ENCODE measurements at regions of chr12 and their contacts with region 1.

Region 1: GRCh38 chr12:56117778-56118687 is at the start of gene ZC3H10:
- DNase-seq: peak; percentile 99
- ATAC-seq: peak; percentile 77
- H3K4me3 Mint-ChIP-seq: peak within 1 kb of the TSS; percentile 97
- H3K27ac Mint-ChIP-seq: peak within 1 kb of the TSS; percentile 100
- H3K4me1 Mint-ChIP-seq: peaks cover 24% of the 10 kb centered on the region
- H3K27me3 Mint-ChIP-seq: no peaks in the 10 kb centered on the region
- total RNA-seq, gene ZC3H10: 6.4 to 6.5 TPM

Region 2: DNA sequence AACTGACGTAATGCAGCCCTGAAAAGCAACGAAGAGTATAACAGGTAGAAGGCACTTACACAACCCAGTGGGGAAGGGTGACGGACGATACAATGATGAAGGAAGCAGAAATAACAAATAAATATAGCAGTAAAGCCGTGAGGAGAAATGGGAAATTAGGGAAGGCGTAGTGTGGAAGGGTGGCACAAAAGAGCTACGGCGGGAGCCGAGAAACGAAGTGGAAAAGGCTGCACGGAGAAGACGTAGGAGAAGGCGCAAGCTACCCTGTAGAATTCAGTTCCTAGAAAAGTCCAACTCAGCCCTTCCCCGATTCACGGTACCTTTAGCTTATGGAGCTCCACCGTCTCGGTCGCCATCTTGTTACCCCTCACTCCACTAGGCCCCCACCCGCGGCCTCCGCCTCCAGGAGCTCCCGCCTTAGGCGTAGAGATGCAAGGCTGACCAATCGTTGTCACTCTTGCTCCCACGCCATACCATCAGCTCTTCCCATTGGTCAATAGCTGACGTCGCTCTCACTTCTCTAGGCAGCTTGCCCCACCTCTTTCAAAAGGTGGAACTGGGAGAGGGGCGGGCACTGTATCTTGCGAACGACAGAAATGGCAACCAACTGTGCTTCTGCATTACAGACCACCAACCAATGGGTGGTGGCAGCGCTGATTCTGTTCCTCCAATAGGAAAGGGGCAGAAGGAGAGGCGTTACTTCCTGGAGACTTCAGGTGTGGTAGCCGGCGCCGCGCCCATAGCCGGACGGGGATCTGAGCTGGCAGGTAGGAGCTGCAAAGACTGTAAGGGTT is 300.5 kb before region 1 on chr12 and contains the starts of genes ORMDL2 and SARNP:
- CTCF ChIA-PET with region 1: no interaction called
- POLR2A ChIA-PET with region 1: interaction called, 3 read pairs
- intact Hi-C with region 1: loop called (anchors 1 to 5 kb)
- DNase-seq: peak; percentile 97
- ATAC-seq: peak; percentile 98
- H3K4me3 Mint-ChIP-seq: no peak within 1 kb of the TSS
- H3K27ac Mint-ChIP-seq: no peak within 1 kb of the TSS
- H3K4me1 Mint-ChIP-seq: peaks cover 49% of the 10 kb centered on the region
- H3K27me3 Mint-ChIP-seq: no peaks in the 10 kb centered on the region
- total RNA-seq, gene ORMDL2: 29.4 to 35.6 TPM
- total RNA-seq, gene SARNP: 111 to 114 TPM

Region 3: DNA sequence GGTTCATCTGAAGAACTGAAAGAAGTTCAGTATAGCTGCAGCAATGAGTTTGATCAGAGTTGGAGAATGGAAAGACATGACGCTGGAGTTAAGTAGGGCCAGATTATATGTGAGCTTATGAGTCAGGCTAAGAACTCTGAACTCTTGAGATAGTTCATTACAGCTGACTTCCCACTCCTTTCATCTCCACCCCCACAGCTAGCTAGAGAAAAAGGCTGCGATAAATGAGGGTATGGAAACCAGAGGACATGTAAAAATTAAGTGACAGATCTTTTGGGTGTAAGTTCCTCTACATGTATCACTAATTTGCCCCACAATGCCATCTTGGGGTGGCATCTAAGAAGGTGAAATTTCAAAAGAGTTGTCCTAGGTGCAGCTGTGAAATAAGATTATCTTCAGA is 219.0 kb before region 1 on chr12:
- CTCF ChIA-PET with region 1: no interaction called
- POLR2A ChIA-PET with region 1: no interaction called
- intact Hi-C with region 1: no loop called
- DNase-seq: peak; percentile 67
- ATAC-seq: peak; percentile 97
- H3K4me3 Mint-ChIP-seq: no peak overlapping the region
- H3K27ac Mint-ChIP-seq: peak overlapping the region; percentile 79
- H3K4me1 Mint-ChIP-seq: peaks cover 9% of the 10 kb centered on the region
- H3K27me3 Mint-ChIP-seq: no peaks in the 10 kb centered on the region

Region 4: GRCh38 chr12:56078990-56079664 is 38.9 kb before region 1 on chr12:
- CTCF ChIA-PET with region 1: no interaction called
- POLR2A ChIA-PET with region 1: no interaction called
- intact Hi-C with region 1: loop called in 1 of 2 experiments (anchors 1 kb)
- DNase-seq: peak; percentile 76
- ATAC-seq: peak; percentile 42
- H3K4me3 Mint-ChIP-seq: peak overlapping the region; percentile 74
- H3K27ac Mint-ChIP-seq: no peak overlapping the region
- H3K4me1 Mint-ChIP-seq: peaks cover 8% of the 10 kb centered on the region
- H3K27me3 Mint-ChIP-seq: peaks cover 6% of the 10 kb centered on the region

Region 5: DNA sequence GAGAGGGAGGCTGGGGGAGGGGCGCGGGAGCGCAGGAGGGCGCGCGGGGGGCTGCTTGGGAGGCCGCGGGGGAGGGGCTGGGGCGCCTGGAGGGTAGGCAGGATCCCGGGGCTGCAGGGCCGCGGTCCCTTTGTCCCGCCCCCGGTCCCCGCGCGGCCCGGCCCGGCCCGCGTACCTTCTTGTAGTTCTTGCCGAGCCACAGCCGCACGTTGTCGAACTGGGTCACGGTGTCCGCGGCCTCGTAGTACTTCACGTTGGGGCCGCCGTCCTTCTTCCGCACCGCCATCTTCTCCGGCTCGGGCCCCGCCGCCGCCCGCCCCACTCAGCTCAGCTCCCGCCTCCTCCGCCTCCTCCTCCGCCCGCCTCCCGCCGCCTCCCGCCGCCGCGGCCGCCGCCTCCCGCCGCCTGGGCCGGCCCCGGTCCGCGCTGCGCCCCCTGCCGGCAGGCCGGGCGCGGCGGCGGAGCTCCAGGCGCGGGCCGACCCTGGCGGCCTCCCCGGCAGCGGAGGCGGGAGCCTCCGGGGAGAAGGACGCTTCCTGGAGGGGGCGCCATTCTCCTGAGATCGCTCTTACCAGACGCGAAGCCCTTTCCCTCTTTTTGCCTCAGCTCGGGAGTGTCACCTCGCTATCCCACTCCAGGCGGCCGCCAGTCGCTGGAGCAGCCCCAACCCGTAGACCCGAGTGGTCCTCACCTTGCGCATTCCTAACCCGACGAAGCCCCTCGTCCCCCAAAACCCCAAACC is 71.3 kb after region 1 on chr12 and contains the start of gene SMARCC2:
- CTCF ChIA-PET with region 1: interaction called, 112 read pairs
- POLR2A ChIA-PET with region 1: interaction called, 27 read pairs
- intact Hi-C with region 1: loop called (anchors 1 kb)
- DNase-seq: peak; percentile 94
- ATAC-seq: peak; percentile 82
- H3K4me3 Mint-ChIP-seq: peak within 1 kb of the TSS; percentile 82
- H3K27ac Mint-ChIP-seq: peak within 1 kb of the TSS; percentile 96
- H3K4me1 Mint-ChIP-seq: peaks cover 38% of the 10 kb centered on the region
- H3K27me3 Mint-ChIP-seq: no peaks in the 10 kb centered on the region
- total RNA-seq, gene SMARCC2: 96.9 to 123 TPM

Region 6: DNA sequence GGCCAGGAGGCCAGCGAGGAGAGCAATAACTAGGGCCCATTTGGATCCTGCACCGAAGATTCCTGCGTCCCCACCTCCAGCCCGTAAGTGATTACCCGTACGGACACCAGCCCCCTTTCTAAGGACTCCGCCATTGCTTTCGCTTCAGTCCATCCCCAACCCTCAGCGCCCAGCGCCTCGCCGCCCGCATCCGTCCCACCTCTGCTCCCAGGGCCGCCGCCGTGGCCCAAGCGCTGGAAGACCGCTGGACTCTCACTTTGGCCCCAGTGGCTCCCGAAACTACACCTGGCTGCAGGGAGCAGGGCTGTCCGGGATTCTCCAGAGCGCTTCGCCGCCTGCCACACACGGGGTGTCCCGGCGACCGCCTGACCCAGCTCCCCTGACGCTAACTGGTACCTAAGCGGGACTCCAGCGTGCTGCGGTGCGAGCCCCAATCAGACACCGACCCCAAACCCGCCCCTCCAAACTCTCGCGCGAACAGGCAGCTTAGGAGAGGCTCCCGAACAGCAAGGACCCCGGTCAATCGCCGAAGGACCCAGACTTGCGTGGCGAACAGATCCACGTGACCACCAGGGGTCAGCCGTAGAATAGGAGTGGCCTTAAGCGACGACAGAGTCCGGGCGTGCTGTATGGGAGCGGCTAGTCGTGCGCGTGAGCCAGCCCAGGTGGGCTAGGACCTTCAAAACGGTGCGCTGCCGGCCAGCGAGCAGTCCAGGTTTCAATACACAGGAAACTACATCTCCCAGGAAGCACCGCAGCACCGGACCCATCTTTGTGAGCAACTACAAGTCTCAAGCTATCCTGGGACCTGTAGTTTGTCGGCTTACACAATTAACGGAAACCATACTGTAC is 197.8 kb after region 1 on chr12 and contains the start of gene CNPY2:
- CTCF ChIA-PET with region 1: interaction called, 4 read pairs
- POLR2A ChIA-PET with region 1: no interaction called
- intact Hi-C with region 1: loop called in 1 of 2 experiments (anchors 1 kb)
- DNase-seq: peak; percentile 95
- ATAC-seq: peak; percentile 93
- H3K4me3 Mint-ChIP-seq: peak within 1 kb of the TSS; percentile 97
- H3K27ac Mint-ChIP-seq: peak within 1 kb of the TSS; percentile 95
- H3K4me1 Mint-ChIP-seq: peaks cover 18% of the 10 kb centered on the region
- H3K27me3 Mint-ChIP-seq: no peaks in the 10 kb centered on the region
- total RNA-seq, gene CNPY2: 77.4 to 82.6 TPM

Region 7: DNA sequence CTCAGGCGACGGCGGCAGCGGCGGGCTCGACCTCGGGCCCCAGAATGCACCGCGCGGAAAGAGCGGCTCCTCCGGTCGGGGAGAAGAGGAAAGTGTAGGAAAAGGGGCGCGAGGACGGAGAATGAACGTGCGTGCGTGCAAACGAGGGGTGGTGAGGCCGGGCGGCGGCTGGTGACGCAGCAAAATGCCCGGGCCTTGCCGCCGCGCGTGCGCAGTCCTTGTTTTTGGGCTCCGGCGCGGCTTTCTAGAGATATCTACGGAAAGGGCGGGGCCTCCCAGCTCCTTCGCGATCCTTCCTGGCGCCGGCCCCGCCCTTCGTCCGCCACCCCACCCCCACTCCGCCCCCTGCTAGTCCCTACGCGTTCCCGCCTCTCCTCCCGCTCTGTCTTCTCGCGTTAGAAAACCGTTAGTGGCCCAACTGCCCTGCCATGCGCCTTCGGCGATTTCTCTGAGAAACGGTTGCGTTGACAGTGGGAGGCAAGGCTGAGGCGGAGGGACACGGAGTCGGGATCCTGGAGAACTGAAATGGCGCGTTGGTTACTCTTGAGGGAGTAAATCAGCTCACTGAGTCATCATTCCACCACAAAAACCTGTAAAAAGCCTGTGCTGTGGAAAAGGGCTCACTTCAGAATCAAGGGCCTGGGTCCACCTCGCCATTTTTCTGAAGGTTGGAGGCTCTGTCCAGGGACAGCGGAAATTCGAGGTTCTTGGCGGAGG is 570.3 kb after region 1 on chr12 and contains the start of gene PTGES3:
- CTCF ChIA-PET with region 1: no interaction called
- POLR2A ChIA-PET with region 1: no interaction called
- intact Hi-C with region 1: loop called in 1 of 2 experiments (anchors 5 kb)
- DNase-seq: peak; percentile 99
- ATAC-seq: peak; percentile 85
- H3K4me3 Mint-ChIP-seq: peak within 1 kb of the TSS; percentile 99
- H3K27ac Mint-ChIP-seq: peak within 1 kb of the TSS; percentile 100
- H3K4me1 Mint-ChIP-seq: peaks cover 11% of the 10 kb centered on the region
- H3K27me3 Mint-ChIP-seq: no peaks in the 10 kb centered on the region
- total RNA-seq, gene PTGES3: 284 to 386 TPM

Measured in activated CD4-positive, alpha-beta T cell treated with anti-CD3 and anti-CD28 coated beads for 36 hours (primary cell).